Transverse colon (tissue), 4 donors: ENCODE measurements at regions of chr2 and their contacts with region 1.

Region 1: GRCh38 chr2:210946395-210946794 is 390.0 kb downstream of the CPS1 start:
- DNase-seq: no peak
- H3K4me3 ChIP-seq: no peak overlapping the region
- H3K27ac ChIP-seq: no peak overlapping the region
- H3K4me1 ChIP-seq: no peaks in the 10 kb centered on the region
- H3K27me3 ChIP-seq: no peaks in the 10 kb centered on the region
- CTCF ChIP-seq: no peak
- EP300 ChIP-seq: no peak
- POLR2A ChIP-seq: no peak

Region 2: GRCh38 chr2:209933499-209934483 is 1012.6 kb before region 1 on chr2:
- in situ Hi-C with region 1: no loop called
- intact Hi-C with region 1: no loop called
- DNase-seq: no peak
- H3K4me3 ChIP-seq: no peak overlapping the region
- H3K27ac ChIP-seq: no peak overlapping the region
- H3K4me1 ChIP-seq: peaks cover 0 to 7% (median 3%) of the 10 kb centered on the region in 4 donors
- H3K27me3 ChIP-seq: no peaks in the 10 kb centered on the region
- CTCF ChIP-seq: no peak
- EP300 ChIP-seq: no peak
- POLR2A ChIP-seq: no peak

Region 3: DNA sequence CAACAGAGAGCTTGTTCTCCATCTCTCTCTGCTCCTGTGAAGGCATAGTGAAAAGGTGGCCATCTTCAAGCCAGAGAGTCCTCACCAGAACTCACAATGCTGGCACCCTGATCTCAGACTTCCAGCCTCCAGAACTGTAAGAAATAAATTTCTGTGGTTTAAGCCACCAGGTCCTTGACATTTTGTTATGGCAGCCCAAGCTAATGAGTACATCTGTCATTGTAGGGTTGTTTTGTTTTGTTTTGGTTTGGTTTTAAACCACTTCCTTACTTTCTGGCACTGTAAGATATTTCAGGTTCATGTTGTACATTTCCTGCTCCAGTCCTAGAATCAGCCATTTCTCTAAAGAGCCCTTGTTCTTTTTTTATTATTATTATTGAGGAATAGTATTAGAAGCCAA is 218.8 kb before region 1 on chr2:
- in situ Hi-C with region 1: no loop called
- intact Hi-C with region 1: no loop called
- DNase-seq: no peak
- H3K4me3 ChIP-seq: no peak overlapping the region
- H3K27ac ChIP-seq: no peak overlapping the region
- H3K4me1 ChIP-seq: no peaks in the 10 kb centered on the region
- H3K27me3 ChIP-seq: no peaks in the 10 kb centered on the region
- CTCF ChIP-seq: no peak
- EP300 ChIP-seq: no peak
- POLR2A ChIP-seq: no peak

Region 4: GRCh38 chr2:212745359-212745758 is 1799.0 kb after region 1 on chr2:
- in situ Hi-C with region 1: no loop called
- intact Hi-C with region 1: loop called (anchors 5 kb)
- DNase-seq: no peak
- H3K4me3 ChIP-seq: no peak overlapping the region
- H3K27ac ChIP-seq: no peak overlapping the region
- H3K4me1 ChIP-seq: no peaks in the 10 kb centered on the region
- H3K27me3 ChIP-seq: no peaks in the 10 kb centered on the region
- CTCF ChIP-seq: no peak
- EP300 ChIP-seq: no peak
- POLR2A ChIP-seq: no peak